ENCODE measurements at regions of chr1 and their contacts with region 1.

Region 1: DNA sequence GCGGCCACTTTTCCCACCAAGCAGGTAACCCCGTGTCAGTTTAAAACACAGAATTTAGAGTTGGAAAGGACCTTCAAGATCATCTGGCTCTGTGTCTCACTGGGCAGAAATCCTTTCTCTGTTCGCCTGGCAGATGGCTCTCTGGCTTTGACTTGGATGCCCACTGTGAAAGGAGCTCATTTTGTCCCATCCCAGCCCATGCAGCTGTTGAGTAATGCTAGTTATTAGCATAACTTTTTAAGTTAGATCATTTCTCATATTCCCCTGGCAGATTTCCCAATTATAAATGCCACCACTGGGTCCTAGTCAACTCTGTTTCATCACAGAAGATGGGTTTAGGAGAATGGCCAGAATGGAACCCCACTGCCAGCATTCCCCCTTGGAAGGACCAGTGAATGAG is 55.9 kb downstream of the SLC35F3 start:
- DNase-seq: no peak
- ATAC-seq: no peak
- H3K4me3 ChIP-seq: no peak overlapping the region
- H3K27ac ChIP-seq: no peak overlapping the region
- H3K4me1 ChIP-seq: no peaks in the 10 kb centered on the region; the same call in 1 of the 2 replicates
- H3K27me3 ChIP-seq: no peaks in the 10 kb centered on the region
- CTCF ChIP-seq: no peak

Region 2: DNA sequence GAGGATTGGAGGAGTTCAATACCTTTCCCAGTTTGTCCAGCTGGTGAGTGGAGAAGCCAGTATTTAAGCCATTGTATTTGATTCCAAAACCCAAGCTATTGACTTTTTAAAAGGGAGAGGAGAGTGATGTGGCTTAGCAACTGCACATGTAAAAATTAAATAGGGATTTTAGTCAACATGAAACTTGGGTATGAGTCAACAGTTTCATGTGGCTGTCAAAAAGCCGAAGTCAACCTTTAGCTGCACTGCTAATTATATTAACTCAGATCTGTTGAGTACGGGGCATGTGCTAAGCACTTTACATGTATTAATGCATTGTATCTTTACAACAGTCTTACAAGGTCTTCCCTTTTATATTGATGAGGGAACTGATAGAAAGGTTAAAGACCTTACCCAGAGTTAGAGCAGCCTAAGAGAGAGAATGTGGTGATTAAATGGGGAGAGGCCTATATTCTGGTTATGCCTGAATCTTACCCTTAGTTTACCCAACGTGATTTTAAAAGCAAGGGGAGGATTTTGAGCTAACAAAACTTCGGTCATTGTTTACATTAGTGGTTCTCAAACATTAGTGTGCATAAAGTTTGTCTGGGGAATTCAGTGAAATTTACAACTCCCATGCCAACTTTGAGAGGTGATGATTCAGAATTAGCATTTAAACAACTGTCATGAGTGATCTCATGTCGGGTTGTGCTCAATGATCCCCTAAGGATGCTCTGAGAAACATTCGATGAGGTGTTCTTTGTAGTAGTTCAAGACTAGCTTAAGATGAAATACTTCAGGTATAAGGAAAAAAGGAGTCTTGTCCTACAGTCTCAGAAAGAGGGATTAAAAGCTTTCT is 62.8 kb before region 1 on chr1:
- CTCF ChIA-PET with region 1: no interaction called
- POLR2A ChIA-PET with region 1: no interaction called
- in situ Hi-C with region 1: no loop called
- intact Hi-C with region 1: no loop called
- DNase-seq: no peak
- ATAC-seq: no peak
- H3K4me3 ChIP-seq: no peak overlapping the region
- H3K27ac ChIP-seq: no peak overlapping the region
- H3K4me1 ChIP-seq: no peaks in the 10 kb centered on the region
- H3K27me3 ChIP-seq: no peaks in the 10 kb centered on the region
- CTCF ChIP-seq: no peak

Region 3: GRCh38 chr1:233945573-233945972 is 14.8 kb before region 1 on chr1:
- CTCF ChIA-PET with region 1: no interaction called
- POLR2A ChIA-PET with region 1: interaction called, 12 read pairs
- in situ Hi-C with region 1: no loop called
- intact Hi-C with region 1: no loop called
- DNase-seq: peak; percentile 63
- ATAC-seq: peak; percentile 85
- H3K4me3 ChIP-seq: no peak overlapping the region
- H3K27ac ChIP-seq: peak overlapping the region; percentile 45; the same call in 1 of the 2 replicates
- H3K4me1 ChIP-seq: peaks cover 14% of the 10 kb centered on the region
- H3K27me3 ChIP-seq: no peaks in the 10 kb centered on the region
- CTCF ChIP-seq: no peak

Measured in Panc1 (cell line).